Transverse colon (tissue), 4 donors: ENCODE measurements at regions of chr14 and their contacts with region 1.

Region 1: GRCh38 chr14:32244404-32244803 is 41.3 kb upstream of the RNU6-8 start:
- DNase-seq: no peak
- H3K4me3 ChIP-seq: no peak overlapping the region
- H3K27ac ChIP-seq: no peak overlapping the region
- H3K4me1 ChIP-seq: no peaks in the 10 kb centered on the region
- H3K27me3 ChIP-seq: no peaks in the 10 kb centered on the region
- CTCF ChIP-seq: no peak
- EP300 ChIP-seq: no peak
- POLR2A ChIP-seq: no peak

Region 2: GRCh38 chr14:31937721-31938346 is 306.6 kb before region 1 on chr14:
- in situ Hi-C with region 1: no loop called
- intact Hi-C with region 1: loop called (anchors 10 kb)
- DNase-seq: peak; percentile 70
- H3K4me3 ChIP-seq: no peak overlapping the region
- H3K27ac ChIP-seq: peak overlapping the region in 2 of 4 donors; percentile 29 to 47
- H3K4me1 ChIP-seq: peaks cover 0 to 32% (median 7%) of the 10 kb centered on the region in 4 donors
- H3K27me3 ChIP-seq: no peaks in the 10 kb centered on the region
- CTCF ChIP-seq: no peak
- EP300 ChIP-seq: no peak
- POLR2A ChIP-seq: no peak